CD4-positive, alpha-beta T cell (primary cell): ENCODE measurements at regions of chr3 and their contacts with region 1.

Region 1: DNA sequence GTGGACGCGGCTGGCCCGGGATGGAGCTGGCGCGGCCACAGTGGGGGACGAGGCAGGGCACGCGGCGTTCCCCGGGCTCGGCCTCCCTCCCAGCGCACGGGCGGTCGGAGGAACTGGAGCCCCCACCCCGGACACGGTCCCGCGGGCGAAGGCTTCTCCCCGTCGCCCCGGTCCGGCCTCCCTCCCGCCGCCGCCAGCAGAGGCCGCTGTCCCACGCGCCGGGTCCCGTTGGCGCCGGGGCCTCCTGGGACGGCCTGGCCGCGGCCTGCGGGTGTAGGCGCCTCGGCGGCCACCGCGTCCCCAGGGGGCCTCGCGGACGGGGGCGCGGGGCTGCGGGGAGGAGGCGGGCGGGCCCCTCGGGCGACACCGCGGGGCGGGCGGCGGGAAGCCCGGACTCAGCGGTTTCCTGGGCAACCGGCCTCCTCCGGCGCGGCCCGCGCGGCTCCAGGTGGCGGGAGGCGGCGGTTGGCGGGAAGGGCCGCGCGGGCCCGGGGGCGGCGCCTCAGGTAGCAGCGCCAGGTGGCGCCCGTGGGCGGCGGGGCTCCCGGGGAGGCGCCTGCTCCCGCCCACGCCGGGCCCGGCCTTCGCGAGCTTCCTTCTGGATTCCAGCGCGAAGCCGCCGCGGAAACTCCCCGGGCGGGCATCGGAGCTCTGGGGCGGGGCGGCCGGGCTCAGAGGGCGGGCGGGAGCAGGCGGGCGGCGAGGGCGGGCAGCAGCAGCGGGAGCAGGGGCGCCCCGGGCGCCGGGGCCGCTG is 26.7 kb downstream of the MELTF start:
- DNase-seq: peak; percentile 49 to 94 (median 72)
- ATAC-seq: peak; percentile 84
- H3K4me3 ChIP-seq: peak overlapping the region; percentile 61
- H3K4me3 Mint-ChIP-seq: no peak overlapping the region
- H3K27ac ChIP-seq: no peak overlapping the region
- H3K27ac Mint-ChIP-seq: no peak overlapping the region
- H3K4me1 ChIP-seq: peaks cover 16% of the 10 kb centered on the region
- H3K4me1 Mint-ChIP-seq: peaks cover 8% of the 10 kb centered on the region
- H3K27me3 ChIP-seq: no peaks in the 10 kb centered on the region
- H3K27me3 Mint-ChIP-seq: no peaks in the 10 kb centered on the region
- CTCF ChIP-seq: peak; percentile 62

Region 2: DNA sequence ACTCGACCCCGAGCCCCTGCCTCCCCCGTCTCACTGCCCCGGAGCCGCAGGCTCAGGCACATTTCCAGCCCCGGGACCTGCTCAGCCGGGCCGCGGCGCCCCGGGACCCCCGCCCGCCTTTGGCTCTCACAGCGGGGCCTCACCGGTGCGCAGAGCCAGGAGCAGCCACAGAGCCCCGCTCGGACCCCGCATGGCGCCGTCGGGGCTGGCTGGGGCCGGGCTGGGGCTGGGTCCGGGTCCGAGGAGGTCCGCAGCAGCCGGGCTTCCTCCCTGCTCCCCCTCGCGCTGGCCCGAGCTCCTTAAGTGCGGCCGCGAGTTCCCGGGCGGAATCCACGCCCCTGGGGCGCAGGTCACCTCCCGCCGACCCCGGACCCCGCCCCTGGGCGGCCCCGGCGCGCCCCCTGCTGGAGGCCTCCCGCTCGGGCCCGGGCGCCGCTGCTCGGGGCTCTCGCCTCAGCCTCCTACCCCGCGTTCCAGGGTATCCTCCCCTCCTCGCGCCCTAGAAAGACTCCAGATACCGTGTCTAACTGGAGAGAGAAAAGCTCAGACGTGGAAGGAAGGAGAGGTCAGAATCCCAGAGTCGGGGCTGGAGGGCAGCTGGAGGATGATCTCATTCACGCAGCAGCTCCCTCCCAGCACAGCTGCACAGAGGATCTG is 26.8 kb after region 1 on chr3 and contains the start of gene MELTF:
- CTCF ChIA-PET with region 1: interaction called, 10 read pairs
- POLR2A ChIA-PET with region 1: interaction called, 7 read pairs
- intact Hi-C with region 1: loop called in 1 of 2 experiments (anchors 1 kb)
- DNase-seq: peak; percentile 38 to 84 (median 66)
- ATAC-seq: peak; percentile 90
- H3K4me3 ChIP-seq: peak within 1 kb of the TSS; percentile 59
- H3K4me3 Mint-ChIP-seq: peak within 1 kb of the TSS; percentile 65
- H3K27ac ChIP-seq: no peak within 1 kb of the TSS
- H3K27ac Mint-ChIP-seq: no peak within 1 kb of the TSS
- H3K4me1 ChIP-seq: peaks cover 20% of the 10 kb centered on the region
- H3K4me1 Mint-ChIP-seq: peaks cover under 1% of the 10 kb centered on the region
- H3K27me3 ChIP-seq: peaks cover 0 to 2% of the 10 kb centered on the region in 2 experiments
- H3K27me3 Mint-ChIP-seq: no peaks in the 10 kb centered on the region
- CTCF ChIP-seq: peak; percentile 72
- total RNA-seq, gene MELTF: 0.89 to 1.2 TPM